Transverse colon (tissue), 4 donors: ENCODE measurements at regions of chr3 and their contacts with region 1.

Region 1: DNA sequence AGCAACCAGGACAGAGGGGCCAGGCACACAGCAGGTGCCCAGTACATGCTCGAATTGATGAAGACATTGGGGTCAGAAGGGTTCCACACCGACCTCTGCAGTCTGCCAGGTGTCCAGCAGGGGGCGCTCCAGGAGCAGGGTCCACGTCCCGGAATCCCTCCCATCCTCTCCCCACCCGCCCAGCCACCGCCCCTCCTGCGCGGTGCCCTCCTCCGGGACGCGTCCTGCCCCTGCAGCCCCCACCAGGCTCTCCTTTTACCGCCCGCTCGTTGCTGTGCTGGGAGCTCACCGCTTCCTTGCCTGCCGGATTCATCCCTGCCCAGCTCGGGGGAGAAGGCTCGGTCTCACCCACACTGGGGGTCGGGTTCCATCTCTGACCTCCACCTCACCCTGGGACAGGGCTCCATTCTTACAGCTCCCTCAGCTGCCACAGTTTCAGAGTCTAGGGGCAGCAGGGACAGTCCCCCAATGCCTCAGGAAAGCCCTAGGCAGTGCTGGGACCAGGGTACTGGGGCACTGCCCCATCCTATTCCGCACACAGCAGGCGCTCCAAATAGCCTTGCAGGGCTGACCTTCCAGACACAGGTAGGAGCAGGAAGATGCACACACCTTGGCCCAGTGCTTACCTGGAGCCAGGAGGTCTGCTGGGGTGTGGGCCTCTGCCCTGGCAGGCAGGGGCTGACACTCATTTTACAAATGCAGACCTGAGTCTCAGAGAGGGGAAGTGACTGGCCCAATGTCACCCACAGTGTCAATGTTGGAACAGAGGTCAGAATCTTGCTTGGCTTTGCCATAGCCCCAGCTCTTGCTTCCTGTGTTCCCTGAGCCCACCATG is 31.0 kb downstream of the GRIP2 start:
- DNase-seq: peak; percentile 67
- H3K4me3 ChIP-seq: no peak overlapping the region
- H3K27ac ChIP-seq: no peak overlapping the region
- H3K4me1 ChIP-seq: no peaks in the 10 kb centered on the region
- H3K27me3 ChIP-seq: no peaks in the 10 kb centered on the region
- CTCF ChIP-seq: peak; percentile 77 to 97 (median 95)
- EP300 ChIP-seq: no peak
- POLR2A ChIP-seq: no peak

Region 2: DNA sequence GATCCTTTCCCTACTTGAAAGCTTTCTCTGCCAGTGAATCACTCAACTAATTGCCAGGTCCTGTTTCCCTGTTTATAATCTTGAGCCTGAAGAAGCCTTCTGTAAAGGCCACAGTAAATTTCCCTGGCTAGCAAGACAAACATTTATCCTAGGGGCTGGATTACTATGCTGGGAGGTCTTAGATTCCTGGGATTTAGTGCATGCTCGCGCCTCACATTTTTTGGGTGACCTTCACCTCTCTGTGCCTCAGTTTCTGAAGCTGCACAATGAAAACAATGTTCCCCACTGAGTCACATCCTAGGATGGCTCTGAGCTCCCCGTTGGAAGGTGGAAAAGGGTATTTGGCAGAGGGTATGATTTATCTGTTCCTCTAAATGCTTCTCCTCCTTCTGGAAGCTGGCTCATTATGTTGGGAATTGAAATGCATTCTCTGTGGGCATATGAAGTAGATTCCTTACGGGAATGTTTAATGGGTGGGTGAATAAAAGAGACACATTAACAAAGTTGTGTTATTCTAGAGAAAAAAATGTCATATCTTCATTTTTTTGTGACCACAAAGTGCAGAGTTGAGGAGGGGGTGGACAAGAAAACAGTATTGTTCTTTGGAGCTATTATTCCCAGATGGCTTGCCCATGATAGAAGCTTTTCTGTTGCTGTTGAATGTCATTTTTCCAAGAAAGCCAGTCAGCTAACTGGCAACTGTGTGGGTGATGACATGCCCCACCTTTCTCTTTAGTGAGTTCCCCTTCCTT is 298.2 kb before region 1 on chr3:
- in situ Hi-C with region 1: no loop called
- intact Hi-C with region 1: no loop called
- DNase-seq: no peak
- H3K4me3 ChIP-seq: no peak overlapping the region
- H3K27ac ChIP-seq: peak overlapping the region in 3 of 4 donors; percentile 4 to 15 (median 12)
- H3K4me1 ChIP-seq: peaks cover 4 to 38% (median 15%) of the 10 kb centered on the region in 4 donors
- H3K27me3 ChIP-seq: no peaks in the 10 kb centered on the region
- CTCF ChIP-seq: no peak
- EP300 ChIP-seq: no peak
- POLR2A ChIP-seq: no peak

Region 3: DNA sequence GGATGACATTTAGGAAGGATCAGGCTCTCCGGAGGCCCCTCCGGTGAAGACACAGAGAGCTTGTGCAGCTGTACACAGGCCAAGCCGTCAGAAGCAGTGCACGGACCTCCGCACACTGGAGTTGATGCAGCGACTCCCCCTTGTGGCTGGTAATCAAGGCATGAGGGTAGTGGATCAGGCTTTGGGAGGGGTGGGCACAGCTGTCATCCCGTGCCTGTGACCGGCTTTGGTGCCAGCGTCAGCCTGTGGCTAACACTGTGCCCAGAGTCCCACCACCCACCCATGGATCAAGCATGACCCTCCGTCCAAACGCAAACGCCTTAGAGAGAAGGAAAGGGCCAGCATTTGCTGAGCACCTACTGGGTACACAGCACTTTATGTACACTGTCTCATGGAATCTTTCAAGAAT is 39.1 kb after region 1 on chr3:
- in situ Hi-C with region 1: no loop called
- intact Hi-C with region 1: loop called (anchors 1 kb)
- DNase-seq: peak; percentile 51
- H3K4me3 ChIP-seq: no peak overlapping the region
- H3K27ac ChIP-seq: no peak overlapping the region
- H3K4me1 ChIP-seq: peaks cover 0 to 7% (median 2%) of the 10 kb centered on the region in 4 donors
- H3K27me3 ChIP-seq: no peaks in the 10 kb centered on the region
- CTCF ChIP-seq: peak; percentile 47 to 57 (median 54)
- EP300 ChIP-seq: no peak
- POLR2A ChIP-seq: no peak

Region 4: DNA sequence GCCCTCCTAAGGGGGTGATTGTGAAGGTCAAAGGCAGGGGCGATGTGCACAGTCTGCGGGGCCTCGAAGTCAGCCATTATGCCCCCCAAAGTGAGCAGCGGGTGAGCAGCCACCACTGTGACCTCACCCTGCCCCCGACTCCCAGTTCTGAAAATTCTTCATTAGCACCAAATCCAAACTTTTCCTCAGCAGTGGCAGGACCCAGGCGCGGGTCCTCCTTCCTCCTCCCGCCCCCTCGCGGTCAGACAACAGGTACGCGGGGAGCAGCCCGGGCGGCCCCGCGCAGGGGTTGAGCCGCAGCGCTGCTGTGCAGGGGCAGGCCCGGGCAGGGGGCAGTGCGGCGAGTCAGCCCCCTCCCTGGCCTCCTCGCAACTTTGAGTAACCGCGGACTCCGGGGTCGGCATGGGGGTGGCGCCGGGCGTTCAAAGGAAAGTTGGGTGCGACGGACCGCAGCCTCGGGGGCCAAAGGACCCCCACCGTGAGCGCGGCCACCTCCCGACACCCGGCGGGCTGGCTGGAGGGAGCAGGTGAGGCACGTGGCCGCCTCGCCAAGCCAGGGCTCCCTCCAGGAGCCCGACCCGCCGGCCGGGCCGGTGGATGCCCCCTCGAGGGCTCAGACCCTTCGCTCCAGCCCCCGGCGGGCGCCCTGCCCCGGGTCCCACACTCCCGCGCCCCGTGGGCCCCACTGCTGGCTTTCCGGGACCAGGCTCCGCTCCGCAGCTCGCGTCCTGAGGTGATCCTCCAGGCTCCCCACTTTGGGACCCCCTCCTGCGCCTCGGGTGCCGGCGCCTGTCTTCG is 93.0 kb after region 1 on chr3:
- in situ Hi-C with region 1: loop called in 1 of 4 experiments (anchors 25 kb)
- intact Hi-C with region 1: no loop called
- DNase-seq: no peak
- H3K4me3 ChIP-seq: peak overlapping the region in 3 of 4 donors; percentile 15 to 36 (median 26)
- H3K27ac ChIP-seq: no peak overlapping the region
- H3K4me1 ChIP-seq: peaks cover 5 to 7% (median 7%) of the 10 kb centered on the region in 4 donors
- H3K27me3 ChIP-seq: peaks cover 64% of the 10 kb centered on the region
- CTCF ChIP-seq: peak in 1 of 5 experiments; percentile 12
- EP300 ChIP-seq: no peak
- POLR2A ChIP-seq: no peak

Region 5: DNA sequence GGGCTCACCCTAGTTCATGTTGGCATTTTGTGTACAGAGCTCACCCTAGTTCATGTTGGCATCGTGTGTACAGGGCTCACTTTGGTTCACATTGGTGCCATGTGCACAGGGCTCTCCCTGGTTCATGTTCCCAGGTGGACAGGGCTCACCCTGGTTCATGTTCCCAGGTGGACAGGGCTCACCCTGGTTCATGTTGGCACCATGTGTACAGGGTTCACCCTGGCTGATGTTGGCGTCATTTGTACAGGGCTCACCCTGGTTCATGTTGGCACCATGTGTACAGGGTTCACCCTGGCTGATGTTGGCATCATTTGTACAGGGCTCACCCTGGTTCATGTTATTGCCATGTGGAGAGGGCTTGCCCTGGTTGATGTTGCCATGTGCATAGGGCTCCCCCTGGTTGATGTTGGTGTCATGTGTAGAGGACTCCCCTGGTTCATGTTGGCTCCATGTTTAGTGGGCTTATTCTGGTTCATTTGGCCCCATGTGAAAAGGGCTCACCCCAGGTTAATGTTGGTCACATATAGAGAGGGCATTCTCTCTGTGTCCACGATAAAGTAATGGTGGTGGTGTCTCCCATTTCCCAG is 406.6 kb after region 1 on chr3:
- in situ Hi-C with region 1: loop called in 1 of 4 experiments (anchors 25 kb)
- intact Hi-C with region 1: loop called (anchors 10 kb)
- DNase-seq: no peak
- H3K4me3 ChIP-seq: no peak overlapping the region
- H3K27ac ChIP-seq: no peak overlapping the region
- H3K4me1 ChIP-seq: peaks cover 0 to under 1% (median 0%) of the 10 kb centered on the region in 4 donors
- H3K27me3 ChIP-seq: no peaks in the 10 kb centered on the region
- CTCF ChIP-seq: peak in 4 of 5 experiments; percentile 14 to 29 (median 20)
- EP300 ChIP-seq: no peak
- POLR2A ChIP-seq: no peak

Region 6: GRCh38 chr3:14921078-14921616 is 412.0 kb after region 1 on chr3:
- in situ Hi-C with region 1: loop called in 1 of 4 experiments (anchors 25 kb)
- intact Hi-C with region 1: loop called (anchors 10 kb)
- DNase-seq: peak; percentile 88
- H3K4me3 ChIP-seq: no peak overlapping the region
- H3K27ac ChIP-seq: no peak overlapping the region
- H3K4me1 ChIP-seq: peaks cover 0 to 7% (median 0%) of the 10 kb centered on the region in 4 donors
- H3K27me3 ChIP-seq: no peaks in the 10 kb centered on the region
- CTCF ChIP-seq: peak; percentile 97 to 99 (median 99)
- EP300 ChIP-seq: no peak
- POLR2A ChIP-seq: no peak

Region 7: DNA sequence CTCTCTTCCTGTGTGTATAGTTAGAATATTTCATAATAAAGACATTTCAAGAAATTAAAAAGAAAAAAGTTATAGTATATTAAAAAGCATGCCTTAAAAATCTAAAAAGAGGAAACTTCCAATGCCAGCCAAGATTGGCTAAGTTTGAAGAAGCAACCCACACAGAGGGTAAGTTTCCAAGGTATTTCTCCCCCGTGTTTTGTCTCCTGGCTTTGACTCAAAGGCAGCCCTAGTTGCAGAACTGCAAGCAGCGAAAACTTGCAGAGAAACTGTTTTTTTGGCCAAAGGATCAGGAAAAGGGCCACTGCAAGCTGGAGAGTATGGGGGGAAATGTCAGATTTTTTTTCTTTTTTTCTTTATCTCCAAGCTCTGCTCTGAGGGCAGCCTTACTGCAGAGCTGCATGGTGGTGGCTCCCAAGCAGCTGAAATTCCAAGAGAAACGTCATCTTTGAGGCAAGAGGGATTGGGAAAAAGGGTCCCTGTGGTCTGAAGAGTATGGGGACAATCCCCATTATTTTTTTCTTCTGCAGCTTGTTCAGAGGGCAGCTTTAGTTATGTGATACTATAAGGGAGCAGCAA is 1069.2 kb after region 1 on chr3:
- in situ Hi-C with region 1: no loop called
- intact Hi-C with region 1: no loop called
- DNase-seq: no peak
- H3K4me3 ChIP-seq: no peak overlapping the region
- H3K27ac ChIP-seq: no peak overlapping the region
- H3K4me1 ChIP-seq: no peaks in the 10 kb centered on the region
- H3K27me3 ChIP-seq: no peaks in the 10 kb centered on the region
- CTCF ChIP-seq: no peak
- EP300 ChIP-seq: no peak
- POLR2A ChIP-seq: no peak